AG04449 (cell line): ENCODE measurements at regions of chr20 and their contacts with region 1.

Region 1: GRCh38 chr20:44747166-44748004 is 1.7 kb downstream of the KCNK15 start:
- DNase-seq: no peak
- H3K4me3 ChIP-seq: no peak overlapping the region
- CTCF ChIP-seq: peak; percentile 77

Region 2: DNA sequence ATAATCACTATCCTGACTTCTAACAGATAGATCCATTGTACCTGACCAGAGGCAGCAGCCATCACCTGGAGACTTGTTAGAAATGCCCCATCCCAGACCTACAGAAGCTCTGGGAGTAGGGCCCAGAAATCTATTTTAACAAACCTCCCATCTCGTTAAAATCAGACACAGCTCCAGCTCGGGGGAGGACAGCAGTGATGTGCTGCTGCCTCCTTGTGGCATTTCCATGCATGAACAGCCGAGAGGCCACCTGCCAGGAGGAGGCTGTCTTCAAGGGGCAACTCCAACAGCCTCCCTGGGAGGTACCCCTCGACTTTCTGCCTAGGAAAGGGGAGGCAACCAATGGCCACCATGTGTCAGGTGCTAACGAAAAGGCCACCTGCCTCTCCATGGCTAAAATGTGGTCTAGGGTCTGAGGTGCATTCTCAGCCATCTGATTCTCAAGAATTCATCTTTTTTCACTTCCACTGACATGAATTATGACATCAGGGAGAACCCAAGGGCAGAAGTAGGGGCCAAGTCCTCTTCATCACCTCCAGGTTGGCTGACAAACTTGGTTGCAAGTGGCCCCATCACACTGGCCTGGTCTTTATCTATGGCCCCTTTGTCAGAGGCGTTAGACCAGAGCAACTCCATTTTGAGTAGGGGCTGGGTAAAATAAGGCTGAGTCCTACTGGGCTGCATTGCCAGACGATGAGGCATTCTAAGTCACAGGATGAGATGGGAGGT is 13.9 kb before region 1 on chr20:
- CTCF ChIA-PET with region 1: interaction called, 48 read pairs
- POLR2A ChIA-PET with region 1: no interaction called
- DNase-seq: no peak
- H3K4me3 ChIP-seq: no peak overlapping the region
- CTCF ChIP-seq: peak; percentile 93

Region 3: GRCh38 chr20:44765652-44766347 is 18.4 kb after region 1 on chr20:
- CTCF ChIA-PET with region 1: interaction called, 44 read pairs
- POLR2A ChIA-PET with region 1: no interaction called
- DNase-seq: no peak
- H3K4me3 ChIP-seq: no peak overlapping the region
- CTCF ChIP-seq: no peak

Region 4: DNA sequence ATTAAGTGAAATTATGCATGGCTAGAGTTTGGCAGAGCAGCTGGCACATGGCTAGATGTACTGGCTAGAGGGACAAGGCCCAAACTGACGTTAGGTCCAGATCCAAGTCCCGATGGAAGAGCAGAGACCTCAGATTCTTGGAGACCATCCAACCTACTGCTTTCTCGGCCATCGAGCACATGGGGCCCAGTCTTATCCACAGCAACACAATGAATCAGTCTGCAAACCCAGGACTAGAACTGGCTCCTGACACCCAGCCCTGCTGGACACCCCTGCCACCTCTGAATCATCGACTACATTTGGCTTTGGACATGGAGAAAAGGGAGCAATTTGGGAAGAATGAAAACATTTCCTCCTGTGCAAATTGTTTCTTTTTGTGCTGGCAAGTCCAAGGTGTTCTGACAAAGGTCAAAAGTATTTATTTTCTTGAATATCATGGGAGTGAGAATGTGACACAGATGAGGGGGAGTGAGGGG is 114.2 kb after region 1 on chr20:
- CTCF ChIA-PET with region 1: interaction called, 142 read pairs
- POLR2A ChIA-PET with region 1: no interaction called
- DNase-seq: peak; percentile 10
- H3K4me3 ChIP-seq: no peak overlapping the region
- CTCF ChIP-seq: no peak

Region 5: GRCh38 chr20:44866703-44867335 is 119.4 kb after region 1 on chr20:
- CTCF ChIA-PET with region 1: interaction called, 142 read pairs
- POLR2A ChIA-PET with region 1: no interaction called
- DNase-seq: no peak
- H3K4me3 ChIP-seq: no peak overlapping the region
- CTCF ChIP-seq: no peak

Region 6: DNA sequence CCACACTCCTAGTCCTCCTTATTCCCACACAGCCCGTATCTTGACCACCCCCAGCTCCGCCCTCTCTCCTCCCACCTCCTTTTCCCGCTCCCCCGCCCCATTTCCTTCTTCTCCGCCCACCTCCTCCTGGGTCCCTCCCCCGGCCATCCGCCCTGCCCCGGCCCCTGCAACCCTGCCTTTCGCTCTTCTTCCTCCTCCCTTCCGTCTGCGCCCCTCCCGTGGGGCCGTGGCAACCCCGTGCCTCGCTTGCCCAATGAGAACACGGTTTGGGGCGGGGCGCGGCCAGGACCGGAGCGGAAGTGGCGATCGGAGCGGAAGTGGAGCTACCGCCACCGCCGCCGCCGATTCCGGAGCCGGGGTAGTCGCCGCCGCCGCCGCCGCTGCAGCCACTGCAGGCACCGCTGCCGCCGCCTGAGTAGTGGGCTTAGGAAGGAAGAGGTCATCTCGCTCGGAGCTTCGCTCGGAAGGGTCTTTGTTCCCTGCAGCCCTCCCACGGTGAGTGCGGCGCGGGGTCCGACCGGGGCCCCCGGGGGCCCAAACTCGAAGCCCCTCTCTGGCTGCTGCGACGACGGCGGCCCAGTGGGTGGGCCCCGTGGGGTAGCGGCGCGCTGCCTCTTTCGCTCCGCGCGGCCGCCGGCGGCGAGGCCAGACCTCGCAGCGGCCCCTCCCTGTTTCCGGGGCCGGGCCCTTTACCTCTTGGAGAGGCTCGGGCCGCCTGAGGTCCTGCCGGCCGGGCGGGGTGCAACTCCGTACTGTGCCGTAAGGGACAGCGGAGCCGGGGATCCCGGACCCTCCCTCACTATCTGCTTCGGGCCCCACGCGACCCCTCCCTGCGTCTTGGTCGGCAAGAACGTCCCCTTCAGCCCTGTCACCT is 138.2 kb after region 1 on chr20 and contains the start of gene YWHAB:
- CTCF ChIA-PET with region 1: interaction called, 13 read pairs
- POLR2A ChIA-PET with region 1: interaction called, 3 read pairs
- DNase-seq: peak; percentile 70
- H3K4me3 ChIP-seq: peak within 1 kb of the TSS; percentile 81
- CTCF ChIP-seq: no peak

Region 7: GRCh38 chr20:44979090-44979621 is 231.8 kb after region 1 on chr20:
- CTCF ChIA-PET with region 1: no interaction called
- POLR2A ChIA-PET with region 1: no interaction called
- DNase-seq: no peak
- H3K4me3 ChIP-seq: no peak overlapping the region
- CTCF ChIP-seq: no peak